Activated CD4-positive, alpha-beta memory T cell treated with anti-CD3 and anti-CD28 coated beads for 36 hours (primary cell): ENCODE measurements at regions of chr17 and their contacts with region 1.

Region 1: GRCh38 chr17:4833178-4833940 is at the start of gene MINK1:
- DNase-seq: peak; percentile 92
- H3K4me3 Mint-ChIP-seq: peak within 1 kb of the TSS; percentile 88
- H3K27ac Mint-ChIP-seq: peak within 1 kb of the TSS; percentile 88
- H3K4me1 Mint-ChIP-seq: peaks cover 28% of the 10 kb centered on the region
- H3K27me3 Mint-ChIP-seq: no peaks in the 10 kb centered on the region
- total RNA-seq, gene MINK1: 67.5 to 79.3 TPM

Region 2: GRCh38 chr17:4733073-4733531 is 100.3 kb before region 1 on chr17:
- CTCF ChIA-PET with region 1: no interaction called
- POLR2A ChIA-PET with region 1: no interaction called
- intact Hi-C with region 1: loop called (anchors 1 kb)
- DNase-seq: no peak
- H3K4me3 Mint-ChIP-seq: peak overlapping the region; percentile 20
- H3K27ac Mint-ChIP-seq: no peak overlapping the region
- H3K4me1 Mint-ChIP-seq: peaks cover 29% of the 10 kb centered on the region
- H3K27me3 Mint-ChIP-seq: peaks cover under 1% of the 10 kb centered on the region

Region 3: GRCh38 chr17:4796553-4796921 is 36.8 kb before region 1 on chr17:
- CTCF ChIA-PET with region 1: no interaction called
- POLR2A ChIA-PET with region 1: no interaction called
- intact Hi-C with region 1: loop called (anchors 2 kb)
- DNase-seq: peak; percentile 44
- H3K4me3 Mint-ChIP-seq: peak overlapping the region; percentile 99
- H3K27ac Mint-ChIP-seq: peak overlapping the region; percentile 92
- H3K4me1 Mint-ChIP-seq: peaks cover 18% of the 10 kb centered on the region
- H3K27me3 Mint-ChIP-seq: no peaks in the 10 kb centered on the region

Region 4: GRCh38 chr17:4881761-4882555 is 48.6 kb after region 1 on chr17:
- CTCF ChIA-PET with region 1: no interaction called
- POLR2A ChIA-PET with region 1: no interaction called
- intact Hi-C with region 1: loop called (anchors 10 kb)
- DNase-seq: peak; percentile 74
- H3K4me3 Mint-ChIP-seq: no peak overlapping the region
- H3K27ac Mint-ChIP-seq: no peak overlapping the region
- H3K4me1 Mint-ChIP-seq: no peaks in the 10 kb centered on the region
- H3K27me3 Mint-ChIP-seq: no peaks in the 10 kb centered on the region